Lower lobe of right lung (tissue), 2 donors: ENCODE measurements at regions of chr1 and their contacts with region 1.

Region 1: DNA sequence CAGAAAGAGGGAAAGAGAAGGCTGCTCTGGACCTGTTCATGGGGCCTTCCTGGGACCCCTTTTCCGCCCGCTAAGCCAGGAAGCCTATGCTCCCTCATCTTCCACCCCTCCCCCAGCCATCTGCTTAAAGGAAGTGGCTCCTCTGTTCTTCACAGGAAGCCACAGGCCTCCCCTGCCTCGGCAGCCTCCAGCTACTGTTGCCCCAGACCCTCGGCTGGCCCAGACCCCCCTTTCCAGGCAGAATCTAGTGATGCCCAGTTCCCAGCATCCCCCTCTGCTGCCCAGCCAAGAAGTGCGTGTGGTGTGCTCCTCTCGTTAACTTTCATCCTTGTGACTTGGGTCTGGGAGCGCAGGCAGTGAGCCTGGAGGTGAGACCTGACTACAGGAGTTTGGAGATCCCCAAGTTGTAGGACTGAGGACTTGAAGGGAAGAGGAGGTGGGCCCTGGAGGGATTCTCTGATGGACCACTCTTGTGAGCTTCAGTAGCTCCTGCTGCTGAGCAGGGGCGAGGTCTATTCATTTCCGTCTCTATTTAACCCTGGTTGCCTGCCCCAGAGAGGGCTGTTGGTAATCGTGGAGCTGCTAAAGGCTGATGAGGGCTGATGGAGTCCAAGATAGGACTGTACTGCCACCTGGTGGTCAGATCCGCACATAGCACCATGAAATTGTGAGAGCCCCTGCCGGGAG is 9.1 kb downstream of the IFI6 start:
- DNase-seq: peak; percentile 78
- ATAC-seq: peak; percentile 71 to 88
- H3K4me3 ChIP-seq: no peak overlapping the region
- H3K27ac ChIP-seq: peak overlapping the region; percentile 78
- H3K4me1 ChIP-seq: peaks cover 39% of the 10 kb centered on the region
- H3K27me3 ChIP-seq: no peaks in the 10 kb centered on the region
- CTCF ChIP-seq: peak; percentile 80

Region 2: DNA sequence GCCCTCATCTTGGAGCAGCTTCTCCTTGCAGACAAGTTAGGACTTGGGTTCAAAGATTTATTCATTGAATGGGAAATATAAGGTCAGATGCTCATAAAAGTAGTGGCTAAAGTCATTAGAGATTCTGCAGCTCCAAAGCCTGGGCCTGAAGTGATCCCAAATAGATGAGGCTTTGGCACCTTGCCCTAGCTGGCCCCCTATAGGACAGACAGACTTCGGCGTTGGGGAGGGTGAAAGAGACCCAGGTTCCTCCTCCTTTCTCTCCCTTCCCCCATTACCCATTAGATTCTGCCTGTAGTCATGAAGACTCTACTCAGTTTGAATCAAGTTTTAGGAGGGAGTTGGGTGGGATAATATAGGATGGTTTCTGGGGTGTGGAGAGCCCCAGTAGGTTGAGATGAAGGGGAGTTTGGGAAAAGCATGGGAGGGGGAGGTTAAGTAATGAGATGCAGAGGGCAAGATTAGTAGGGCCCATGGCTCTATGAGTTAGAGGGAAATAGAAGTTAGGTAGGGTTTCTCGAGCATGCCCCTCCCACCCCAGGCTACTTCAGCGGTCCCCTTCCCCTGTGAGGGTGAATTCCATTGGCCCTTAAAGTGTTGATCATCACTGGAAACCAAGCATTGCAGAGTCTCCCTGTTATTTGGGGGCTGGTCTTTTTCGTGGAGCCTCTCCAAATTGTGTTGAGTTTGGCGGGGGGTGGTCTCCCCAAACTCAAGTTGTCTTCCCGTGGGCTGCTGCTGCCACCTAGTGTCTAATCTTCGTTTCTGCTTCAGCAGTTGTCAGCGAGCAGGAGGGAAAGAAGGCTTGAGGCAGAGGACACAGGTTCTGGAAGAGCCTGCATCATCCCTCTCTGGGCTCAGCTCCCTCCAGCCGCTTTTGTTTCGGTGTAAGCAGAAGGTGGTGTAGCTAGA is 56.8 kb before region 1 on chr1:
- intact Hi-C with region 1: loop called (anchors 5 kb)
- DNase-seq: no peak
- ATAC-seq: no peak
- H3K4me3 ChIP-seq: no peak overlapping the region
- H3K27ac ChIP-seq: no peak overlapping the region
- H3K4me1 ChIP-seq: peaks cover 40% of the 10 kb centered on the region
- H3K27me3 ChIP-seq: no peaks in the 10 kb centered on the region
- CTCF ChIP-seq: peak; percentile 84